B cell (primary cell): ENCODE measurements at regions of chr2 and their contacts with region 1.

Region 1: GRCh38 chr2:44707945-44708660 is 233.4 kb upstream of the SIX3 start:
- DNase-seq: peak; percentile 84
- ATAC-seq: peak; percentile 79
- H3K4me3 ChIP-seq: peak overlapping the region; percentile 32 to 71 (median 58)
- H3K4me3 Mint-ChIP-seq: peak overlapping the region; percentile 85
- H3K27ac ChIP-seq: peak overlapping the region; percentile 78 to 80
- H3K27ac Mint-ChIP-seq: peak overlapping the region; percentile 91
- H3K4me1 ChIP-seq: peaks cover 37 to 47% of the 10 kb centered on the region in 2 donors
- H3K4me1 Mint-ChIP-seq: peaks cover 54% of the 10 kb centered on the region
- H3K27me3 ChIP-seq: no peaks in the 10 kb centered on the region
- H3K27me3 Mint-ChIP-seq: no peaks in the 10 kb centered on the region
- CTCF ChIP-seq: no peak

Region 2: DNA sequence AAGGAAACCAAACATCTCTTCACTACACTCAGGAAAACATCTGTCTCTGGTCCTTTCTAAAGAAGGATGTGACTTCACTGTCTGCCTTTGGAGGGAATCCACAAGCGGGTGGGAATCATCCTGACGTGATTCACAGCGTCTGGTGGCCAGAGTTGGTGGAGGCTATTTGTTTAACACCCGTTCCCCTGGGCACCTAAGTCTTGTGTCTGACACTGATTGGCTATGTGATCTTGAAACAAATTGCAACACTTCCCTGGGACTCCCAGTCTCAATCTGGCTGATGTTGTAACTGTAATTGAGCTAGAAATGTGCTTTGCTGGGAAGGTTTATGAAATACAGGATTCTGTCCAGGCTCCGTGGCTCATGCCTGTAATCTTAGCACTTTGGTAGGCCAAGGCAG is 204.6 kb after region 1 on chr2:
- CTCF ChIA-PET with region 1: no interaction called
- POLR2A ChIA-PET with region 1: no interaction called
- intact Hi-C with region 1: no loop called
- DNase-seq: no peak
- ATAC-seq: no peak
- H3K4me3 ChIP-seq: no peak overlapping the region
- H3K4me3 Mint-ChIP-seq: no peak overlapping the region
- H3K27ac ChIP-seq: no peak overlapping the region
- H3K27ac Mint-ChIP-seq: no peak overlapping the region
- H3K4me1 ChIP-seq: no peaks in the 10 kb centered on the region
- H3K4me1 Mint-ChIP-seq: no peaks in the 10 kb centered on the region
- H3K27me3 ChIP-seq: peaks cover 0 to 10% (median 1%) of the 10 kb centered on the region in 4 experiments
- H3K27me3 Mint-ChIP-seq: peaks cover 35% of the 10 kb centered on the region
- CTCF ChIP-seq: no peak

Region 3: GRCh38 chr2:45611020-45611737 is 903.1 kb after region 1 on chr2 and contains the start of gene SRBD1:
- CTCF ChIA-PET with region 1: no interaction called
- POLR2A ChIA-PET with region 1: interaction called, 12 read pairs
- intact Hi-C with region 1: no loop called
- DNase-seq: peak; percentile 95
- ATAC-seq: peak; percentile 97
- H3K4me3 ChIP-seq: peak within 1 kb of the TSS; percentile 73 to 96 (median 88)
- H3K4me3 Mint-ChIP-seq: peak within 1 kb of the TSS; percentile 95
- H3K27ac ChIP-seq: peak within 1 kb of the TSS; percentile 90 to 93
- H3K27ac Mint-ChIP-seq: peak within 1 kb of the TSS; percentile 93
- H3K4me1 ChIP-seq: peaks cover 13 to 16% of the 10 kb centered on the region in 2 donors
- H3K4me1 Mint-ChIP-seq: peaks cover 26% of the 10 kb centered on the region
- H3K27me3 ChIP-seq: no peaks in the 10 kb centered on the region
- H3K27me3 Mint-ChIP-seq: no peaks in the 10 kb centered on the region
- CTCF ChIP-seq: no peak
- total RNA-seq, gene SRBD1: 27.1 and 27.6 TPM in 2 replicates